Left lung (tissue), 14 donors: ENCODE measurements at regions of chr3 and their contacts with region 1.

Region 1: GRCh38 chr3:99094606-99095005 is 193.1 kb upstream of the DCBLD2 start:
- DNase-seq: no peak
- ATAC-seq: no peak
- H3K4me3 ChIP-seq: no peak overlapping the region
- H3K27ac ChIP-seq: no peak overlapping the region
- H3K4me1 ChIP-seq: no peaks in the 10 kb centered on the region
- H3K27me3 ChIP-seq: no peaks in the 10 kb centered on the region
- CTCF ChIP-seq: no peak

Region 2: GRCh38 chr3:99023590-99024192 is 70.9 kb before region 1 on chr3:
- intact Hi-C with region 1: no loop called
- DNase-seq: peak in 2 of 4 donors; percentile 10 to 31
- ATAC-seq: peak; percentile 70
- H3K4me3 ChIP-seq: no peak overlapping the region
- H3K27ac ChIP-seq: no peak overlapping the region
- H3K4me1 ChIP-seq: no peaks in the 10 kb centered on the region
- H3K27me3 ChIP-seq: no peaks in the 10 kb centered on the region
- CTCF ChIP-seq: peak; percentile 52

Region 3: GRCh38 chr3:99049164-99049563 is 45.4 kb before region 1 on chr3:
- intact Hi-C with region 1: loop called in 1 of 2 experiments (anchors 10 kb)
- DNase-seq: no peak
- ATAC-seq: no peak
- H3K4me3 ChIP-seq: no peak overlapping the region
- H3K27ac ChIP-seq: no peak overlapping the region
- H3K4me1 ChIP-seq: no peaks in the 10 kb centered on the region
- H3K27me3 ChIP-seq: no peaks in the 10 kb centered on the region
- CTCF ChIP-seq: no peak

Region 4: DNA sequence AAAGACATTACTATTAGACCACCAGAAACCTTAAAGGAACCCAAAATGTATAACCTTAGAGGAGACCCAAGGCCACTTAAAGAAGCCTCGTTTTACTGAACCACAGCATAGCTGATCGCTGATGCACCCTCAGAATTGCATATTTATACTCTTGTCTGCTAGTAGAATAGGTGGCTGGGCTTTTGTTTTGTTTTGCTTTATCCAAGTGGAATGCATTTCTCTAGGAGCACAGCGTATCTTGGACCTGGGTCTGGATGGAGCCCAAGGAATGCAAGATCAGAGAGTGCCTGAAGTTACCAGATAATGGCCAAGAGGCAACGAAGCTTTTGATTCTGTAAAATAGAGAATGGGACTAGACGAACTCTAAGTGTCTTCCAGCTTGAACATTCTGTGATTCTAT is 414.6 kb after region 1 on chr3:
- intact Hi-C with region 1: no loop called
- DNase-seq: no peak
- ATAC-seq: no peak
- H3K4me3 ChIP-seq: no peak overlapping the region
- H3K27ac ChIP-seq: no peak overlapping the region
- H3K4me1 ChIP-seq: peaks cover 0 to 6% of the 10 kb centered on the region in 2 donors
- H3K27me3 ChIP-seq: no peaks in the 10 kb centered on the region
- CTCF ChIP-seq: no peak